ENCODE measurements at regions of chr9 and their contacts with region 1.

Region 1: DNA sequence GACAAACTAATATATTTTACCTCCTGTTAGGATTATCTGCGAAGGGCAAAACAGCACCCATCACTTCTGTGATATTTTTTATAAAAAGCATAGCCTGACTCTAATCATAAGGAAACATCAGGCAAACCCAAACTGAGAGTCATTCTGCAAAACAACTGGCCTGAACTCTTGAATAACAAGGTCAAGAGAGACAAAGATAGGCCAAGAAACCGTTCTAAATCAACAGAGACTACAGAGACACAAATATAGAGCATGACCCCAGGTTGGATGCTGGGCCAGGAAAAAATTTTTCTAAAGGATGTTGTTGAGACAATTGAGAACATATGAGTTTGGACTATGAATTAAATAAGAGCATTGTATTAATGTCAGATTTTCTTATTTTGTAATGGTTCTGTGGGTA is 384.9 kb downstream of the NFIB start:
- DNase-seq: no peak
- H3K4me3 ChIP-seq: no peak overlapping the region
- H3K27ac ChIP-seq: no peak overlapping the region
- H3K4me1 ChIP-seq: no peaks in the 10 kb centered on the region
- H3K27me3 ChIP-seq: no peaks in the 10 kb centered on the region
- CTCF ChIP-seq: no peak

Region 2: GRCh38 chr9:13863112-13863511 is 65.9 kb before region 1 on chr9:
- CTCF ChIA-PET with region 1: no interaction called
- POLR2A ChIA-PET with region 1: no interaction called
- intact Hi-C with region 1: loop called (anchors 10 kb)
- DNase-seq: peak; percentile 3
- H3K4me3 ChIP-seq: no peak overlapping the region
- H3K27ac ChIP-seq: no peak overlapping the region
- H3K4me1 ChIP-seq: no peaks in the 10 kb centered on the region
- H3K27me3 ChIP-seq: no peaks in the 10 kb centered on the region
- CTCF ChIP-seq: no peak

Region 3: GRCh38 chr9:14056316-14056861 is 127.4 kb after region 1 on chr9:
- CTCF ChIA-PET with region 1: no interaction called
- POLR2A ChIA-PET with region 1: no interaction called
- intact Hi-C with region 1: no loop called
- DNase-seq: peak; percentile 43
- H3K4me3 ChIP-seq: no peak overlapping the region
- H3K27ac ChIP-seq: no peak overlapping the region
- H3K4me1 ChIP-seq: peaks cover 39% of the 10 kb centered on the region
- H3K27me3 ChIP-seq: no peaks in the 10 kb centered on the region
- CTCF ChIP-seq: no peak

Measured in A673 (cell line).